Dorsolateral prefrontal cortex (tissue), 120 donors: ENCODE measurements at regions of chr7 and their contacts with region 1.

Region 1: DNA sequence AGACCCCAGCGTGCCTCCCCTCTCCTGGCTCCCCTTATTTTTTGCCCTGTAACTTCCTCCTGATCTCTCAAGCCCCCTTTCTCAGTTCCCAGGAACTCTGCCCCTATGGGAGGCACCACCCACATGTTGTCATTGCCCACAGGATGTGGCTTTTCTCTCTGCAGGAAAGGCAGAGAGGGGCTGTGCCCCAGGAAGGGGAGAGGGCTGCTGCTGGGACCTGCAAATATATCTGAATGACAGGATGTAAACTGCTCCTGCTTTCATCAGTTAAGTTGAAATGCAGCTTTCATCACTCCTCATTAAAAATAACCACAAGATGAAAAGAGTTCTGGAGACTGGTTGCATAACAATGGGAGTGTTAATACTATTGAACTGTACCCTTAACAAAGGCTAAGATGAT is 103.3 kb downstream of the CLEC2L start:
- DNase-seq: no peak
- H3K4me3 ChIP-seq: no peak overlapping the region
- H3K27ac ChIP-seq: peak overlapping the region in 7 of 59 donors; percentile 4 to 59 (median 20)
- H3K27me3 ChIP-seq: no peaks in the 10 kb centered on the region
- CTCF ChIP-seq: no peak

Region 2: GRCh38 chr7:139987691-139988516 is 361.1 kb after region 1 on chr7:
- intact Hi-C with region 1: loop called in 1 of 2 experiments (anchors 5 kb)
- DNase-seq: no peak
- H3K4me3 ChIP-seq: no peak overlapping the region
- H3K27ac ChIP-seq: no peak overlapping the region
- H3K27me3 ChIP-seq: no peaks in the 10 kb centered on the region
- CTCF ChIP-seq: peak in 1 of 56 donors; percentile 10